ENCODE measurements at regions of chr2 and their contacts with region 1.

Region 1: GRCh38 chr2:200864176-200864976 is at the start of gene CLK1:
- DNase-seq: peak; percentile 95
- H3K4me3 ChIP-seq: peak within 1 kb of the TSS; percentile 94 to 96
- H3K27ac ChIP-seq: peak within 1 kb of the TSS; percentile 97
- H3K4me1 ChIP-seq: peaks cover 20 to 27% of the 10 kb centered on the region in 2 experiments; a peak in 3 of 4 replicates
- H3K27me3 ChIP-seq: no peaks in the 10 kb centered on the region
- CTCF ChIP-seq: no peak
- EP300 ChIP-seq: peak in 1 of 2 experiments; percentile 75; a peak in 3 of 4 replicates
- RAD21 ChIP-seq: no peak
- polyA plus RNA-seq, gene CLK1: 31.1 and 40.1 TPM in 2 replicates

Region 2: DNA sequence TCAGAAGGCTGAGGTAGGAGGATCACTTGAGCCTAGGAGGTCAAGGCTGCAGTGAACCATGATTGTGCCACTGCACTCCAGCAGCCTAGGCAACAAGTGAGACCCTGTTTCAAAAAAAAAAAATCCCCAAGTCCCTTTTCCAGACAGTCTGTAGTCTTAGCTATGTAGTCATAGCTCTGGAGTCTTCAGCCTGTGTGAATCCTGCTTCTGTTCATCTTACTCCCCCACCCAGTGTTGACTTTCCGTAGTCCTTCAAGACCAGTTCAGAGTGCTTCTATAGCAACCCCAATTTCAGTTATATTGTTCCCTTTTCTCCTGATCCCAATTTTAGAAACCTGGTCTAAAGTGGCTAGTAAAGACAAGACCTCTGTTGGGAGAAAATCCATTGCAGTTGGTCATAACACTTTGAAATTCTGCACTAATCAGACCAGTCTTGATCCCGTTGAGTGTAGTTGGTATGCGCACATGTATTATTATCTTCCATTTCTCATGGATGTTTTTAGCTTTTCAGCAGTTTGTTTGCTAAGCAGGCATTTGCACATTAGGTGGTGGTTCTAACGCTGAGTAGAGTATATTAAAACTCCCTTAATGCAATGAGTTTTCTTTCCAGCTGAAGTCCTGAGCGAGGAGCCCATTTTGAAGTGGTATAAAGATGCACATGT is 43.7 kb before region 1 on chr2:
- CTCF ChIA-PET with region 1: no interaction called
- POLR2A ChIA-PET with region 1: no interaction called
- DNase-seq: no peak
- H3K4me3 ChIP-seq: no peak overlapping the region
- H3K27ac ChIP-seq: no peak overlapping the region
- H3K4me1 ChIP-seq: no peaks in the 10 kb centered on the region; a peak in 1 of 4 replicates
- H3K27me3 ChIP-seq: no peaks in the 10 kb centered on the region
- CTCF ChIP-seq: no peak
- EP300 ChIP-seq: no peak
- RAD21 ChIP-seq: no peak

Region 3: GRCh38 chr2:200888704-200889625 is 24.6 kb after region 1 on chr2 and contains the starts of genes NIF3L1 and PPIL3:
- CTCF ChIA-PET with region 1: no interaction called
- POLR2A ChIA-PET with region 1: interaction called, 17 read pairs
- DNase-seq: peak; percentile 84
- H3K4me3 ChIP-seq: peak within 1 kb of the TSS; percentile 81 to 89
- H3K27ac ChIP-seq: peak within 1 kb of the TSS; percentile 95 to 96
- H3K4me1 ChIP-seq: peaks cover 2 to 10% of the 10 kb centered on the region in 2 experiments; a peak in 3 of 4 replicates
- H3K27me3 ChIP-seq: no peaks in the 10 kb centered on the region
- CTCF ChIP-seq: no peak; the same call in 1 of the 2 replicates
- EP300 ChIP-seq: peak in 1 of 2 experiments; percentile 38; a peak in 1 of 4 replicates
- RAD21 ChIP-seq: no peak
- polyA plus RNA-seq, gene NIF3L1: 52.4 and 77.6 TPM in 2 replicates
- polyA plus RNA-seq, gene PPIL3: 44.9 and 56.5 TPM in 2 replicates

Measured in SK-N-SH (cell line).